SK-N-SH (cell line): ENCODE measurements at regions of chr6 and their contacts with region 1.

Region 1: DNA sequence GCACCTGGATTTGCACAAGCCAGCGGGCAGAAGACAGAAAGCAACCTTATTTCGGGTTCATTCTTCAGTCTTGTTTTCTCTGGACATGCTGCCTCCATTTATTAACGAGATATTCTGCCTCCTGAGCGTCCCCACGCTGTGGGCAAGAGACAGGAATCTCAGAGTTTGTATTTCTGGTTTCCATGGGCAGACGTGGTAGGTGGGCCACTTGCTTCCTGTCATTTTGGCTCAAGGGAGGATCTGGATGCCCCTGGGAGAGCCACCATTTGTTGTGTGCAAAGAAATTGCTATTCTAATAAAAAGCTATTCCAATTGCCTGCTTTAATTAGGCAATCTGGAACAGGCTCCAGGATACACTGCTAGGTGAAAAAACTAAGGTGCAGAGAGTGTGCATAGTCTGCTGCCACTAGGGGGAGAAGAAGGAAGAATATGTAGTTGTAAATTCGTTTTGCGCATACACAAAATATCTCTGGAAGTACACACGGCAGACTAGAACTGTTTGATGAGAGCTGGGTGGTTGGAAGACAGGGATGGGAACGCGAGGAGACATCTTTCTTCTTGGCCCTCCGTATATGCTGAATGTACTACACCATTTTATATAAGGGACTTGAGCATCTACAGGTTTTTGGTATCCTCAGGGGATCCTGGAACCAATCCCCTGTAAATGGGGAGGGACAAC is 30.1 kb upstream of the SLC16A10 start:
- DNase-seq: peak; percentile 48
- H3K4me3 ChIP-seq: no peak overlapping the region; a peak in 1 of 4 replicates
- H3K27ac ChIP-seq: no peak overlapping the region
- H3K4me1 ChIP-seq: no peaks in the 10 kb centered on the region; a peak in 1 of 4 replicates
- H3K27me3 ChIP-seq: no peaks in the 10 kb centered on the region
- CTCF ChIP-seq: peak; percentile 84
- EP300 ChIP-seq: no peak
- RAD21 ChIP-seq: peak; percentile 78

Region 2: DNA sequence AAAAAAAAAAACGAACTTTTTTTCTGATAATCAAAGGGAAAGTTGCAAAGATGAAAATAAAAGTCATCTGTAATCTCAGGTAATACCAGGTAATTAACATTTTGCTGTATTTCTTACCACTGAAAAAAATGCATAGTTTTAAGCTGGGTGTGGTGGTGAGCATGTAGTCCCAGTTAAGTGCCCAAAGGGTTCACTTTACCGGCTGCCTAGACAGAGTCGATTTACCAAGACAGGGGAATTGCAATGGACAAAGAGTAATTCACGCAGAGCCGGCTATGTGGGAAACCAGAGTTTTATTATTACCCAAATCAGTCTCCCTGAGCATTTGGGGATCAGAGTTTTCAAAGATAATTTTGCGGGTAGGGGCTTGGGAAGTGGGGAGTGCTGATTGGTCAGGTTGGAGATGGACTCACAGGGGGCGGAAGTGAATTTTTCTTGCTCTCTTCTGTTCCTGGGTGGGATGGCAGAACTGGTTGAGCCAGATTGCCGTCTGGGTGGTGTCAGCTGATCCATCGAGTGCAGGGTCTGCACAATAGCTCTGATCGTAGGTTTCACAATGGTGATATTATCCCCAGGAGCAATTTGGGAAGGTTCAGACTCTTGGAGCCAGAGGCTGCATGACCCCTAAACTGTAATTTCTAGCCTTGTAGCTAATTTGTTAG is 23.5 kb before region 1 on chr6:
- CTCF ChIA-PET with region 1: interaction called, 11 read pairs
- POLR2A ChIA-PET with region 1: no interaction called
- DNase-seq: no peak
- H3K4me3 ChIP-seq: no peak overlapping the region
- H3K27ac ChIP-seq: no peak overlapping the region
- H3K4me1 ChIP-seq: peaks cover 0 to 3% of the 10 kb centered on the region in 2 experiments; a peak in 1 of 4 replicates
- H3K27me3 ChIP-seq: no peaks in the 10 kb centered on the region
- CTCF ChIP-seq: no peak
- EP300 ChIP-seq: no peak
- RAD21 ChIP-seq: no peak

Region 3: GRCh38 chr6:111070105-111071005 is 13.1 kb after region 1 on chr6:
- CTCF ChIA-PET with region 1: interaction called, 37 read pairs
- POLR2A ChIA-PET with region 1: no interaction called
- DNase-seq: no peak
- H3K4me3 ChIP-seq: no peak overlapping the region
- H3K27ac ChIP-seq: no peak overlapping the region
- H3K4me1 ChIP-seq: peaks cover 0 to 2% of the 10 kb centered on the region in 2 experiments; a peak in 2 of 4 replicates
- H3K27me3 ChIP-seq: no peaks in the 10 kb centered on the region; the same call in 1 of the 2 replicates
- CTCF ChIP-seq: no peak
- EP300 ChIP-seq: no peak
- RAD21 ChIP-seq: no peak

Region 4: DNA sequence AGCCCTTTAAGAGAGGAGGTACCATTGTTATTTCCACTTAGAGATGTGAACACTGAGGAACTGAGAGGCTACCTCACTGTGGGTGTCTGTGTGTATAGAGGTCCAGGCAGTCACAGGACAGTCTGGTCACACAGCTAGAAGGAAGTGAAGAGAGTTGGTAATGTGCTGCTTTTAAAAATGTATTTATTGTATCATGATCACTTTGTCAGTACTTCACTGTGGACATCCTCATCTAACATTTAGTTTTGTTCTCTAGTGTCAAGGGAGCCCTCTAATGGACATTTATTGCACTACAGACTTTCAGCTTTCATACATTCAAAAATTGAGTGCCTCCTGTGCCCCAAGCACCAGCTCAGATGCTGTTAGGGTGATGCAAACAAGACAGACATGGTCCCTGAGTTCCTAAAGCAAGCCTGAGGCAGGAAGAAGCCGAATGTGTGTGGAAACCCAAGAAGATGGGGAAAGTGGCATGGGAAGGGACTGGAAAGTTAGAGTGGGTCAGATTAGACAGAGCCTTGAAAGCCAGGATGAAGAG is 153.0 kb after region 1 on chr6:
- CTCF ChIA-PET with region 1: interaction called, 108 read pairs
- POLR2A ChIA-PET with region 1: no interaction called
- DNase-seq: peak; percentile 61
- H3K4me3 ChIP-seq: no peak overlapping the region
- H3K27ac ChIP-seq: no peak overlapping the region
- H3K4me1 ChIP-seq: no peaks in the 10 kb centered on the region
- H3K27me3 ChIP-seq: no peaks in the 10 kb centered on the region
- CTCF ChIP-seq: peak; percentile 81
- EP300 ChIP-seq: no peak
- RAD21 ChIP-seq: peak; percentile 92

Region 5: DNA sequence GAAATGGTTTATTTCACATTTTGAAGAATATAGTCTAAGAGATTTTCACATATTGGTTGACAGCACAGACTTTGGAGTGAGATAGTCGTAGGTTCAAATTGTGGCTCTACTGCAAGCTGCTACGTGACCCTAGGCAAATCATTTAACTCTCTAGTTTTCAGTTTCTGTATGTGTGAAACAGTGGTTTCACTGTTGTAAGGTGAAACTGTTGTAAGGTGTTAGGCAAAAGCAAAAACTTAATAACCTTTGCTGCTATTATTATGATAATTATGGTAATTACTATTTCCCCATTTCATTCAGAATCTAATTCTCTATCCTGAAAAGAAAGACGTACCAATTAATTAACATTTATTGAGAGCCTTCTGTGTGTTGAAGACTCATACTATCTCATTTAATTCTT is 281.6 kb after region 1 on chr6:
- CTCF ChIA-PET with region 1: no interaction called
- POLR2A ChIA-PET with region 1: no interaction called
- DNase-seq: no peak
- H3K4me3 ChIP-seq: no peak overlapping the region
- H3K27ac ChIP-seq: no peak overlapping the region
- H3K4me1 ChIP-seq: no peaks in the 10 kb centered on the region; a peak in 1 of 4 replicates
- H3K27me3 ChIP-seq: no peaks in the 10 kb centered on the region
- CTCF ChIP-seq: no peak
- EP300 ChIP-seq: no peak
- RAD21 ChIP-seq: no peak